ENCODE measurements at regions of chr3 and their contacts with region 1.

Region 1: GRCh38 chr3:56347219-56347871 is 120.9 kb downstream of the ERC2 start:
- DNase-seq: no peak
- H3K4me3 ChIP-seq: no peak overlapping the region
- H3K27ac ChIP-seq: no peak overlapping the region
- H3K4me1 ChIP-seq: no peaks in the 10 kb centered on the region
- H3K27me3 ChIP-seq: peaks cover 0 to 35% (median 2%) of the 10 kb centered on the region in 4 donors
- CTCF ChIP-seq: peak in 1 of 6 experiments; percentile 28
- POLR2A ChIP-seq: no peak

Region 2: DNA sequence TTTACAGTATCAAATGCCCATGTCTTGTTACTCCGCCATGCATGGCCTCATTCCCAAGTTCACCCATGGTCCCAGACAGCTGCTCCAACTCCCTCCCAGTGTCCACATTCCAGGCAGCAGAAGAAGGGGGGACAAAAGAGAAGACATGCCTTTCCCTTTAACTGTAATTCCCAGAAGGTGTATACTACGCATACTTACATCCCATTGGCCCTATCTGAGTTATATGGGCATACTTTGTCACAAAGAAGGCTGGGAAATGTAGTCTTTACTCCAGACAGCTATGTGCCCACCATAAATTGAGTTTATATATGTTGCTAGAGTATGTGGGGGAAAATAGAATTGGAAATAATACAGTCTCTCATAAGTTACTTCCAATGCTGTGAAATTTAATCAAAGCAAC is 50.5 kb after region 1 on chr3:
- intact Hi-C with region 1: no loop called
- DNase-seq: no peak
- H3K4me3 ChIP-seq: no peak overlapping the region
- H3K27ac ChIP-seq: no peak overlapping the region
- H3K4me1 ChIP-seq: no peaks in the 10 kb centered on the region
- H3K27me3 ChIP-seq: peaks cover 0 to 37% (median 0%) of the 10 kb centered on the region in 4 donors
- CTCF ChIP-seq: no peak
- POLR2A ChIP-seq: no peak

Region 3: GRCh38 chr3:56443372-56443771 is 96.0 kb after region 1 on chr3:
- intact Hi-C with region 1: loop called (anchors 10 kb)
- DNase-seq: no peak
- H3K4me3 ChIP-seq: no peak overlapping the region
- H3K27ac ChIP-seq: no peak overlapping the region
- H3K4me1 ChIP-seq: no peaks in the 10 kb centered on the region
- H3K27me3 ChIP-seq: peaks cover 0 to 24% (median 0%) of the 10 kb centered on the region in 4 donors
- CTCF ChIP-seq: no peak
- POLR2A ChIP-seq: no peak

Measured in esophagus squamous epithelium (tissue), 5 donors.